GM12878 (cell line): ENCODE measurements at regions of chr12 and their contacts with region 1.

Region 1: GRCh38 chr12:45215419-45216229 is at the start of gene ANO6:
- DNase-seq: peak; percentile 76
- ATAC-seq: peak; percentile 83
- H3K4me3 ChIP-seq: peak within 1 kb of the TSS; percentile 99
- H3K27ac ChIP-seq: peak within 1 kb of the TSS; percentile 94
- H3K4me1 ChIP-seq: peaks cover 7% of the 10 kb centered on the region
- H3K27me3 ChIP-seq: no peaks in the 10 kb centered on the region
- CTCF ChIP-seq: peak in 2 of 3 experiments; percentile 13 to 47; a peak in 2 of 6 replicates
- EP300 ChIP-seq: 0 out of 4 replicates have a peak, but pooled peaks of 1 of the 2 experiments have one; percentile 24
- POLR2A ChIP-seq: peak; percentile 92
- RAD21 ChIP-seq: no peak
- polyA plus RNA-seq, gene ANO6: 4.6 to 5.6 TPM

Region 2: GRCh38 chr12:45112306-45112705 is 103.3 kb before region 1 on chr12:
- CTCF ChIA-PET with region 1: no interaction called
- POLR2A ChIA-PET with region 1: no interaction called
- RAD21 ChIA-PET with region 1: no interaction called
- SMC1A ChIA-PET with region 1: no interaction called
- in situ Hi-C with region 1: no loop called
- intact Hi-C with region 1: no loop called
- DNase-seq: no peak
- ATAC-seq: no peak
- H3K4me3 ChIP-seq: no peak overlapping the region
- H3K27ac ChIP-seq: no peak overlapping the region
- H3K4me1 ChIP-seq: no peaks in the 10 kb centered on the region
- H3K27me3 ChIP-seq: no peaks in the 10 kb centered on the region
- CTCF ChIP-seq: no peak
- EP300 ChIP-seq: no peak
- POLR2A ChIP-seq: no peak
- RAD21 ChIP-seq: no peak

Region 3: GRCh38 chr12:45170456-45171042 is 45.1 kb before region 1 on chr12:
- CTCF ChIA-PET with region 1: interaction called, 4 read pairs
- POLR2A ChIA-PET with region 1: no interaction called
- RAD21 ChIA-PET with region 1: no interaction called
- SMC1A ChIA-PET with region 1: interaction called, 6 read pairs
- in situ Hi-C with region 1: no loop called
- intact Hi-C with region 1: loop called (anchors 2 kb)
- DNase-seq: peak; percentile 26
- ATAC-seq: peak; percentile 95
- H3K4me3 ChIP-seq: no peak overlapping the region
- H3K27ac ChIP-seq: no peak overlapping the region
- H3K4me1 ChIP-seq: no peaks in the 10 kb centered on the region
- H3K27me3 ChIP-seq: no peaks in the 10 kb centered on the region
- CTCF ChIP-seq: peak; percentile 89 to 92 (median 90)
- EP300 ChIP-seq: no peak
- POLR2A ChIP-seq: no peak
- RAD21 ChIP-seq: peak; percentile 90

Region 4: DNA sequence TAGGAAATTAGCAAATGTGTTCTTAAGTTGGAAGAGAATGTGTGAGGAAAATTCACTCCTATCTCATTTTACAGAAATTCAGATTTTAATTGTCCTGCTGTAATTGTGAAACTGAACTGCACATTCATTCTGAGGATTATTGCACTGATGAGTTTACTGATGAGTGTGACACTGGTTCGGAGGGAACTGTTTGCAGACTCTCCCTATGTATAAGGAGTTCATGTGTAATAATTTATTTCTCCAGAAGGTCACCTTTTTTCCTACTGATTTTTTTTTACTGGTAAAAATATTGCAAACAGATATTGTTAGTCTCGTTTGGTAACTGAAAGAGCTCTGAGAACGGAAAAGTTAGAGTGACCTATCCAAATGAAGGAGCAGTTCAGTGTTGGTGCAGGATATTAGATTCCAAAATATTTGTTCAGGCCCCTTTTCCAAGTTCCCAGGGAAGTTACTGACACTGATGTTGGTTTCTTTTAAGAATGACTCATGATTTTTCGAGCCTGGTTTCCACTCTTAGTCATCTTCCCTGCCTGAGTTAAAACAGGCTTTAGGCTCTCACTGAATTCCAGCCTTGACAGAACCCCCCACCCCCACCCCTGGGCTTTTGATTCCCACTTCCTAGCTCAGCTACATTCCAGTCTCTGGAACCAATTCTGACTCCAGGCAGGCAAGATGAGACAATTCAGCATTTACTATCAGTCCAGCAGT is 18.7 kb after region 1 on chr12:
- CTCF ChIA-PET with region 1: interaction called, 6 read pairs
- POLR2A ChIA-PET with region 1: interaction called, 8 read pairs
- RAD21 ChIA-PET with region 1: interaction called, 7 read pairs
- SMC1A ChIA-PET with region 1: interaction called, 13 read pairs
- in situ Hi-C with region 1: no loop called
- intact Hi-C with region 1: no loop called
- DNase-seq: no peak
- ATAC-seq: peak; percentile 78
- H3K4me3 ChIP-seq: 0 out of 2 replicates have a peak overlapping the region, but pooled peaks have one; percentile 11
- H3K27ac ChIP-seq: peak overlapping the region; percentile 66
- H3K4me1 ChIP-seq: peaks cover 40% of the 10 kb centered on the region
- H3K27me3 ChIP-seq: no peaks in the 10 kb centered on the region
- CTCF ChIP-seq: no peak
- EP300 ChIP-seq: no peak
- POLR2A ChIP-seq: no peak
- RAD21 ChIP-seq: no peak

Region 5: GRCh38 chr12:45388545-45388944 is 172.9 kb after region 1 on chr12:
- CTCF ChIA-PET with region 1: interaction called, 25 read pairs
- POLR2A ChIA-PET with region 1: no interaction called
- RAD21 ChIA-PET with region 1: no interaction called
- SMC1A ChIA-PET with region 1: interaction called, 4 read pairs
- in situ Hi-C with region 1: no loop called
- intact Hi-C with region 1: no loop called
- DNase-seq: no peak
- ATAC-seq: no peak; the same call in 2 of the 3 replicates
- H3K4me3 ChIP-seq: no peak overlapping the region
- H3K27ac ChIP-seq: no peak overlapping the region
- H3K4me1 ChIP-seq: no peaks in the 10 kb centered on the region
- H3K27me3 ChIP-seq: no peaks in the 10 kb centered on the region
- CTCF ChIP-seq: peak; percentile 25 to 50 (median 35); a peak in 4 of 6 replicates
- EP300 ChIP-seq: no peak
- POLR2A ChIP-seq: no peak
- RAD21 ChIP-seq: peak; percentile 50

Region 6: GRCh38 chr12:45728630-45729232 is 513.1 kb after region 1 on chr12:
- CTCF ChIA-PET with region 1: interaction called, 4 read pairs
- POLR2A ChIA-PET with region 1: no interaction called
- RAD21 ChIA-PET with region 1: interaction called, 6 read pairs
- SMC1A ChIA-PET with region 1: interaction called, 3 read pairs
- in situ Hi-C with region 1: no loop called
- intact Hi-C with region 1: loop called (anchors 5 kb)
- DNase-seq: peak; percentile 87
- ATAC-seq: peak; percentile 73
- H3K4me3 ChIP-seq: peak overlapping the region; percentile 93
- H3K27ac ChIP-seq: peak overlapping the region; percentile 95
- H3K4me1 ChIP-seq: no peaks in the 10 kb centered on the region
- H3K27me3 ChIP-seq: no peaks in the 10 kb centered on the region
- CTCF ChIP-seq: peak; percentile 94 to 98 (median 96)
- EP300 ChIP-seq: peak; percentile 36 to 45; a peak in 1 of 4 replicates
- POLR2A ChIP-seq: peak; percentile 96
- RAD21 ChIP-seq: peak; percentile 64

Region 7: DNA sequence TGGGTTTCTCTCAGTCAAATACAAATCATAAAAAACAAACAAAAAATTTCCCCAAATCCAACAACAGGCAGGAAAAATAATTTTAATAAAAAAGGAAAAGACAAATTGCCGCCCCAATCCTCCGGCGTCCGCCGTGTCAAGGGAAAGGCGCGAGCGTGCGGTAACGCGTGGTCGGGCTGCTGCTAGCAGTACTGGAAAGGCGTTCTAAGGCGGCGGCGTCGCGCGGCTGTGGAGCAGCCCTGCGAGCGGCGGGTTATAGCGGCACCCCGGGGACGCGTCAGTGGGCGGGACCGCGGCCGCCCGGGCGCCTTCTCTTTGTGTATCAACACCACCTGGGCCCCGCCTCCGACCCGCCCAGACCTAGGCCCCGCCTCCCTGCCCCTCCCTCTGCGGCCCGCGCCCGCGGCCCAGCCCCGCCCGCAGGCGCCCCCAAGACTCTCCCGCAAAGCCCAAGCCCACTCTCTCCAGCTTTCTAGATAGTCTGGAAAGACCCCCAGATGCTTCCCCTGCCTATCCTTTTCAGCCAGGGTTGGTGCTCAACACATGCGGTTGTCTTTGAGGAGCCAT is 1157.0 kb after region 1 on chr12 and contains the start of gene SLC38A2:
- CTCF ChIA-PET with region 1: no interaction called
- POLR2A ChIA-PET with region 1: no interaction called
- RAD21 ChIA-PET with region 1: no interaction called
- SMC1A ChIA-PET with region 1: no interaction called
- in situ Hi-C with region 1: no loop called
- intact Hi-C with region 1: loop called (anchors 10 kb)
- DNase-seq: no peak
- ATAC-seq: peak; percentile 90
- H3K4me3 ChIP-seq: peak within 1 kb of the TSS; percentile 84
- H3K27ac ChIP-seq: peak within 1 kb of the TSS; percentile 85
- H3K4me1 ChIP-seq: peaks cover 10% of the 10 kb centered on the region
- H3K27me3 ChIP-seq: no peaks in the 10 kb centered on the region
- CTCF ChIP-seq: no peak
- EP300 ChIP-seq: no peak
- POLR2A ChIP-seq: peak; percentile 99
- RAD21 ChIP-seq: no peak
- polyA plus RNA-seq, gene SLC38A2: 36.2 to 47.3 TPM